IMR-90 (cell line): ENCODE measurements at regions of chr4 and their contacts with region 1.

Region 1: DNA sequence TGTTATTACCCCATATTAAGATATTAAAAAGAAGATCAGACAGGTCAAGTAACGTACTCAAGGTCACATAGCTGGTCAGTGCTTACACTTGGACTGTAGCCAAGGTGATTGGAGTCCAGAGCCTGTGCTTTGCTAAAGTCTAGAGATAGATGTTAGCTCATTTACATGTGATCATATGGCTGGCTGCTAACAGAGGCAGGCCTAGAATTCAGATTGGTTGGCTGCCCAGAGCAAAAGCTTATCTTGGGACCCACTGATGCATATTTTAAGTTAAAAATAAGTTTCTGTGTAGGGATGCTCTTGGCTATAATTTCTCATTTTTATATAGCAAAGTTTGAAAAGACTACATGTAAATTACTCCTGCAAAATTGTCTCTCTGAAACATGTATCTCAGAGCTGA is 18.1 kb upstream of the EXOC1L start:
- DNase-seq: no peak
- ATAC-seq: no peak
- H3K4me3 ChIP-seq: no peak overlapping the region
- H3K27ac ChIP-seq: no peak overlapping the region
- H3K4me1 ChIP-seq: no peaks in the 10 kb centered on the region
- H3K27me3 ChIP-seq: peaks cover under 1% of the 10 kb centered on the region; the same call in 1 of the 2 replicates
- CTCF ChIP-seq: no peak
- POLR2A ChIP-seq: no peak
- RAD21 ChIP-seq: no peak

Region 2: DNA sequence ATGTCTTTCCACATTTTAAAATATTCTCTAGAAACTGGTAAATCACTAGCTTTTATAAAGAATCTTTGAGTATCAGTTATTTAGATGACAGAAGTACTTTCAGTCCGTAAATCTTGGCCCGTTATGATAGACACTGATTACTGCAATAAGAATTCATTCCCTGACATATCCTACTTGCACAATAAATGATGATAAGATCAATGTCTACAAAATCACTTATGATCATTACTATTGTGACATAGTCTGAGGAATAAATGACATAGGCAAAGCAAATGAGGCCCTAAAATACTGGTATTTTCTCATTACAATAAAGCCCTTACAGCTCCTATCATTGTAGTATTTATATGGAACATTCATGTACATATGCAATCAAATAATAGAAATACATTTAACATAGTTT is 202.9 kb before region 1 on chr4:
- CTCF ChIA-PET with region 1: no interaction called
- POLR2A ChIA-PET with region 1: no interaction called
- dilution Hi-C with region 1: no loop called
- in situ Hi-C with region 1: no loop called
- intact Hi-C with region 1: no loop called
- DNase-seq: no peak
- ATAC-seq: no peak
- H3K4me3 ChIP-seq: no peak overlapping the region
- H3K27ac ChIP-seq: no peak overlapping the region
- H3K4me1 ChIP-seq: no peaks in the 10 kb centered on the region
- H3K27me3 ChIP-seq: no peaks in the 10 kb centered on the region
- CTCF ChIP-seq: no peak
- POLR2A ChIP-seq: no peak
- RAD21 ChIP-seq: no peak

Region 3: DNA sequence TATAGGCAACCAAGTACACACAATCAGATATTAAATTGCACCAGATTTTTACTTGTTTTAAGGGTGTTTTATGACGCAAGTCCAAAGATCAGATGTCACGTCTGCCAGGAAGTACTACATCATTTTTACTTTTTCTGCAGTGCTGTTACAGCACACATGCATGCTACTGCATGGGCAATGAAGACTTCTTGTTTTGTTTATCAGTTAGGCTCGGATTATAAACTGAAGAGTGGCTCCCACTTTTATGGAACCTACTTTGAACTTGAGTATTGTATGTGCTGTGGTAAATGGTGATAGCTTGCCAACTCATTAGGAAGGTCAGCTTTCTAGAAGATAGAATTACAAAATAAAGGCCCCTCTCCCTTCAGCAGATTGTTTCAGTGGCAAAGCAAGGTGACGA is 278.9 kb after region 1 on chr4:
- CTCF ChIA-PET with region 1: no interaction called
- POLR2A ChIA-PET with region 1: no interaction called
- dilution Hi-C with region 1: no loop called
- in situ Hi-C with region 1: no loop called
- intact Hi-C with region 1: loop called (anchors 5 kb)
- DNase-seq: no peak
- ATAC-seq: no peak
- H3K4me3 ChIP-seq: no peak overlapping the region
- H3K27ac ChIP-seq: no peak overlapping the region
- H3K4me1 ChIP-seq: no peaks in the 10 kb centered on the region
- H3K27me3 ChIP-seq: no peaks in the 10 kb centered on the region
- CTCF ChIP-seq: no peak
- POLR2A ChIP-seq: no peak
- RAD21 ChIP-seq: no peak